Left lung (tissue), 14 donors: ENCODE measurements at regions of chr1 and their contacts with region 1.

Region 1: DNA sequence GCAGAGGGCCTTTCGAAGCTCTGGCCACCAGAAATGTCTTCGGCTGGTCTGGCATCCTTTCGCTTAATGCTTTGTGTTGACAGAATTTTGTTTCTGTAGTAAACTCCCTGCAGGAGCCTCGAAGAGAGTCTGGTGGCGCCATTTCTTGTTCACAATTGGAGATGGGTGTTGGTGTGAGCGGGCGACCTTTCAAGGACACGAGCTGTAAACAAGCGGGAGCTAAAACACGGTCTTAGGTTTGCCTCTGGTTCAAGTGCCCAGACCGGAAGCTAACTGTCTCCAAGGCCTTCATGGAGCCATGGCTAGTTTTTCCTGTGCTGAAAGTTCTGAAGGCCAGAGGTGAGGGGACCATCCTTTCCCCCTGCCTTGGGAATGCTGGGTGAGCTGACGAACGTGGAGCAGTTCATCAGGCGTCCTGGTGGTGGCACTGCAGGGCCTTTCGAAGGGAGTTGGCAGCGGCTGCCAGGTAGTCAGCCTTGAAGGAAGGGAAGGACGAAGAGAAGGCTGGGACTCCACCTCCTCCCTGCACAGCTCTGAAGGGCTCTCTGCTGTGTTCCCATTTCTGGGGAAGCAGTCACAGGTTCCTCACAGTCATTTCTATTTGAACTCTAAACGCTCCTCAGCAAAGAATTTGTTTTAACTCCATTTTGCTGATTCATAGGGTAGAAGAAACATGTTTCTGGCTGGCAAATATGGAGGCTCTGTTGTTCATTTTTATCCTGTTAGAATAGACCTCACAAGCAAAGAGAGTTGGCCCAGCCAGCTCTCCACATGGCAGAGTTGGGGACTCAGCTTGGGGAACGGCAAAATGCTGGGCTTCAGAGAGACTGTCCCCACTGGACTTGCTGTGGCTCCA is 35.2 kb downstream of the URB2 start:
- DNase-seq: peak; percentile 54 to 89 (median 80)
- ATAC-seq: peak; percentile 100
- H3K4me3 ChIP-seq: no peak overlapping the region
- H3K27ac ChIP-seq: no peak overlapping the region
- H3K4me1 ChIP-seq: peaks cover 3 to 4% of the 10 kb centered on the region in 2 donors
- H3K27me3 ChIP-seq: no peaks in the 10 kb centered on the region
- CTCF ChIP-seq: peak; percentile 82 to 83

Region 2: GRCh38 chr1:230268366-230269170 is 607.3 kb after region 1 on chr1:
- intact Hi-C with region 1: loop called in 1 of 2 experiments (anchors 5 kb)
- DNase-seq: peak in 2 of 4 donors; percentile 34 to 57
- ATAC-seq: peak; percentile 85
- H3K4me3 ChIP-seq: no peak overlapping the region
- H3K27ac ChIP-seq: no peak overlapping the region
- H3K4me1 ChIP-seq: peaks cover 4 to 15% of the 10 kb centered on the region in 2 donors
- H3K27me3 ChIP-seq: no peaks in the 10 kb centered on the region
- CTCF ChIP-seq: peak; percentile 9 to 45

Region 3: GRCh38 chr1:230310381-230311163 is 649.3 kb after region 1 on chr1:
- intact Hi-C with region 1: loop called in 1 of 2 experiments (anchors 5 kb)
- DNase-seq: peak; percentile 67 to 88 (median 80)
- ATAC-seq: peak; percentile 98
- H3K4me3 ChIP-seq: no peak overlapping the region
- H3K27ac ChIP-seq: no peak overlapping the region
- H3K4me1 ChIP-seq: no peaks in the 10 kb centered on the region
- H3K27me3 ChIP-seq: peaks cover 0 to 19% of the 10 kb centered on the region in 2 donors
- CTCF ChIP-seq: peak; percentile 81 to 90